ENCODE measurements at regions of chr6 and their contacts with region 1.

Region 1: DNA sequence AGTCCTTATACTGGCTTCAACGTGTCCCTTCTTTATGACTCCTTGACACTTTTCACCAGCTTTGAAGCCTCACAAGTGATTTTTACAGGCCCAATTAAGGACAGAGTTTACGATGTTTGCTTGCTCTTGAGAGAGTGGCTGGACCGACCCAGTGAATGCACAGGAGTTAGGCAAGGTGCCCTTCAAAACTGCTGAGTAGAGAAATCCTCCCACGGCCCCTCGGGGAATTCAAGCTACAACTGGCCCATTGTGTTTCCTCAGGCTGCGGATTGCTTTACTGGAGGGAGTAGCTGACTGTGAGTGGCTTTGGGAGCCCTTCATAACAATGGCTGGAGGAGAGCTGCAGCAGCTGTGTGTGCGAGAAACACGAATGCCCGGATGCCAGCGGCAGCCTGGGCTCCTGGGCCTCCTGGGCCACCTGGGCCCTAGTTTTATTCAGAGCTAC is 50.0 kb downstream of the SGK1 start:
- DNase-seq: no peak
- ATAC-seq: no peak
- H3K4me3 ChIP-seq: no peak overlapping the region
- H3K4me3 Mint-ChIP-seq: no peak overlapping the region
- H3K27ac ChIP-seq: no peak overlapping the region
- H3K27ac Mint-ChIP-seq: no peak overlapping the region
- H3K4me1 ChIP-seq: peaks cover 7 to 13% of the 10 kb centered on the region in 2 experiments
- H3K4me1 Mint-ChIP-seq: peaks cover 11 to 17% (median 15%) of the 10 kb centered on the region in 3 donors
- H3K27me3 ChIP-seq: no peaks in the 10 kb centered on the region
- H3K27me3 Mint-ChIP-seq: no peaks in the 10 kb centered on the region

Region 2: GRCh38 chr6:134363318-134364039 is 95.5 kb after region 1 on chr6:
- CTCF ChIA-PET with region 1: no interaction called
- POLR2A ChIA-PET with region 1: no interaction called
- DNase-seq: no peak
- ATAC-seq: no peak
- H3K4me3 ChIP-seq: no peak overlapping the region
- H3K4me3 Mint-ChIP-seq: no peak overlapping the region
- H3K27ac ChIP-seq: no peak overlapping the region
- H3K27ac Mint-ChIP-seq: no peak overlapping the region
- H3K4me1 ChIP-seq: peaks cover 0 to 2% of the 10 kb centered on the region in 2 experiments
- H3K4me1 Mint-ChIP-seq: peaks cover 0 to 5% (median 1%) of the 10 kb centered on the region in 3 donors
- H3K27me3 ChIP-seq: no peaks in the 10 kb centered on the region
- H3K27me3 Mint-ChIP-seq: no peaks in the 10 kb centered on the region

Region 3: GRCh38 chr6:134640975-134641429 is 373.1 kb after region 1 on chr6:
- CTCF ChIA-PET with region 1: interaction called in 1 of 2 experiments, 3 read pairs
- POLR2A ChIA-PET with region 1: interaction called in 1 of 2 experiments, 13 read pairs
- DNase-seq: peak; percentile 46 to 89 (median 69)
- ATAC-seq: peak; percentile 86 to 90 (median 89)
- H3K4me3 ChIP-seq: no peak overlapping the region
- H3K4me3 Mint-ChIP-seq: no peak overlapping the region
- H3K27ac ChIP-seq: no peak overlapping the region
- H3K27ac Mint-ChIP-seq: no peak overlapping the region
- H3K4me1 ChIP-seq: peaks cover 0 to 8% of the 10 kb centered on the region in 2 experiments
- H3K4me1 Mint-ChIP-seq: peaks cover 18 to 20% (median 18%) of the 10 kb centered on the region in 3 donors
- H3K27me3 ChIP-seq: no peaks in the 10 kb centered on the region
- H3K27me3 Mint-ChIP-seq: no peaks in the 10 kb centered on the region

Measured in T-cell (primary cell).